ENCODE measurements at regions of chr14 and their contacts with region 1.

Region 1: GRCh38 chr14:72824051-72824450 is 69.8 kb downstream of the DPF3 start:
- DNase-seq: no peak
- H3K4me3 ChIP-seq: no peak overlapping the region
- H3K27ac ChIP-seq: no peak overlapping the region
- H3K4me1 ChIP-seq: peaks cover 0 to 19% (median 4%) of the 10 kb centered on the region in 4 donors
- H3K27me3 ChIP-seq: no peaks in the 10 kb centered on the region
- CTCF ChIP-seq: no peak
- EP300 ChIP-seq: no peak
- POLR2A ChIP-seq: no peak

Region 2: DNA sequence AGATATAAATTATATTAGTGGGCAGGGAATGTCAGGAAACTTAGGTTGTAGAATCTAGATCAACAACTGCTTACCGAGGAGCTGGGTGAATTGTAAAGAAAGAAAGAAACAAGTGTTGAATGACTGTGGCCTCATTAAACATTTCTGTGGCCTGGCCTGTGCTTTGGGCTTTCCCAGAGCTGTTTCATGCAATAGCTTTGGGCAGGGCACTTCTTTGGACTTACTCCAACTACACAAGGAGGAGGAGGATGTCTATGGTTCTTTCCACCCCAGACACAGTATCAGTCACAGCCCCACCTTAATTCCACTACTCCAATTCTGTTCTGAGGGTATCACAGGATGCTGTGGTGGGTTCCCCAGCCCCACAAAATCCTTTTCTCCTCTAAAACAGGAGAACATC is 31.9 kb after region 1 on chr14:
- in situ Hi-C with region 1: no loop called
- intact Hi-C with region 1: loop called (anchors 1 kb)
- DNase-seq: peak; percentile 55
- H3K4me3 ChIP-seq: no peak overlapping the region
- H3K27ac ChIP-seq: peak overlapping the region; percentile 51 to 68 (median 62)
- H3K4me1 ChIP-seq: peaks cover 8 to 33% (median 21%) of the 10 kb centered on the region in 4 donors
- H3K27me3 ChIP-seq: no peaks in the 10 kb centered on the region
- CTCF ChIP-seq: no peak
- EP300 ChIP-seq: no peak
- POLR2A ChIP-seq: no peak

Region 3: GRCh38 chr14:72883961-72884360 is 59.9 kb after region 1 on chr14:
- in situ Hi-C with region 1: no loop called
- intact Hi-C with region 1: no loop called
- DNase-seq: no peak
- H3K4me3 ChIP-seq: no peak overlapping the region
- H3K27ac ChIP-seq: no peak overlapping the region
- H3K4me1 ChIP-seq: no peaks in the 10 kb centered on the region
- H3K27me3 ChIP-seq: no peaks in the 10 kb centered on the region
- CTCF ChIP-seq: no peak
- EP300 ChIP-seq: no peak
- POLR2A ChIP-seq: no peak